ENCODE measurements at regions of chr2 and their contacts with region 1.

Region 1: DNA sequence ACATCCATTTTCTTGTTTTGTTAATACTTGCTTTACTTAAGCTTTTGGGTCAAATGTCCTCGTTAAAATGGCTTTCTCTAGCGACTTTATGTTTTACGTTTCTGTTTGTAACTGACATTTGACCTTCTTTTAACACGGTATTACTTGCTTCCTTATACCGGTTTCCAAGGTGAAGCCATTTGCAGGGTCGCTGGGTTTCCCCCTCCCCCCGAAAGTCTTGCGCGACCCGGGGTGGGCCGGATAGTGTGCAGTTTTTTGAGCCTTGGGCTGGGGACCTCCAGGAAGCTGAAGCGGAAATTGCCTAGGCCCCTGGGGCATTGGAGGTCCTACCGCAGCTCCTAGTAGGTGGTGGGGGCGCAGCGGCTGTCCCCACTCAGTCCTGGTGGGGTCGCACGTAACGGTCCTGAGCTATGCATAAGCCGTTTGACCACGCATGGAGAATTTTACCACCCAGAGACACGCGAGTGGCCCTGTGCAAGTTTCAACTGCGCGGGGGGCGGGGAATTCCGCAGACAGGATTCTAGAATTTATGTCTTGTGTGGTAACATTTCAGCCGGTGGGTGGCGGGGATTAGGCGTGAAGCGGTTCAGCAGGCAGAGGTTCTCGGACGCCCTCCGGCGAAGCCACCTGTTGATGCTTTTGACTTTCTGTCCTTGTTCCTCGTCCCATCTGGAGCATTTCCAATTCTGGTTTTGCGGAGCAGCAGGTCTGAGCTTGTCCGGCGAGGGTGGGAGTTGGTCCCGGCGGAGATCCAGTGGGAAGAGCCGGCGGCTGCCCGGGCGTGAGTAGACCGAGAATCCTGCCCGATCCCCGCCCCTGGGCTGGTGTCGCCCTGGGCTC is 2.4 kb downstream of the CFLAR start:
- DNase-seq: peak; percentile 86 to 92
- ATAC-seq: peak; percentile 49 to 75 (median 66)
- H3K4me3 ChIP-seq: peak overlapping the region; percentile 73 to 96 (median 84)
- H3K27ac ChIP-seq: peak overlapping the region; percentile 98 to 100 (median 100)
- H3K4me1 ChIP-seq: peaks cover 3 to 59% (median 50%) of the 10 kb centered on the region in 9 donors
- H3K27me3 ChIP-seq: no peaks in the 10 kb centered on the region
- CTCF ChIP-seq: peak; percentile 26 to 70 (median 52)

Region 2: GRCh38 chr2:200585730-200586643 is 532.4 kb before region 1 on chr2 and contains the start of gene AOX1:
- intact Hi-C with region 1: no loop called
- DNase-seq: peak in 1 of 2 donors; percentile 46
- ATAC-seq: peak; percentile 51 to 78 (median 71)
- H3K4me3 ChIP-seq: peak within 1 kb of the TSS; percentile 16 to 71 (median 58)
- H3K27ac ChIP-seq: peak within 1 kb of the TSS in 7 of 10 donors; percentile 18 to 71 (median 33)
- H3K4me1 ChIP-seq: peaks cover 0 to 14% (median 7%) of the 10 kb centered on the region in 9 donors
- H3K27me3 ChIP-seq: peaks cover 0 to 5% (median 0%) of the 10 kb centered on the region in 7 donors
- CTCF ChIP-seq: peak in 1 of 9 donors; percentile 6
- total RNA-seq, gene AOX1: 0.72 to 22.3 (median 2.2) TPM

Region 3: GRCh38 chr2:200850512-200851256 is 267.7 kb before region 1 on chr2:
- intact Hi-C with region 1: no loop called
- DNase-seq: no peak
- ATAC-seq: peak in 6 of 8 donors; percentile 20 to 63 (median 42)
- H3K4me3 ChIP-seq: no peak overlapping the region
- H3K27ac ChIP-seq: no peak overlapping the region
- H3K4me1 ChIP-seq: peaks cover 0 to 7% (median 0%) of the 10 kb centered on the region in 9 donors
- H3K27me3 ChIP-seq: no peaks in the 10 kb centered on the region
- CTCF ChIP-seq: no peak

Region 4: DNA sequence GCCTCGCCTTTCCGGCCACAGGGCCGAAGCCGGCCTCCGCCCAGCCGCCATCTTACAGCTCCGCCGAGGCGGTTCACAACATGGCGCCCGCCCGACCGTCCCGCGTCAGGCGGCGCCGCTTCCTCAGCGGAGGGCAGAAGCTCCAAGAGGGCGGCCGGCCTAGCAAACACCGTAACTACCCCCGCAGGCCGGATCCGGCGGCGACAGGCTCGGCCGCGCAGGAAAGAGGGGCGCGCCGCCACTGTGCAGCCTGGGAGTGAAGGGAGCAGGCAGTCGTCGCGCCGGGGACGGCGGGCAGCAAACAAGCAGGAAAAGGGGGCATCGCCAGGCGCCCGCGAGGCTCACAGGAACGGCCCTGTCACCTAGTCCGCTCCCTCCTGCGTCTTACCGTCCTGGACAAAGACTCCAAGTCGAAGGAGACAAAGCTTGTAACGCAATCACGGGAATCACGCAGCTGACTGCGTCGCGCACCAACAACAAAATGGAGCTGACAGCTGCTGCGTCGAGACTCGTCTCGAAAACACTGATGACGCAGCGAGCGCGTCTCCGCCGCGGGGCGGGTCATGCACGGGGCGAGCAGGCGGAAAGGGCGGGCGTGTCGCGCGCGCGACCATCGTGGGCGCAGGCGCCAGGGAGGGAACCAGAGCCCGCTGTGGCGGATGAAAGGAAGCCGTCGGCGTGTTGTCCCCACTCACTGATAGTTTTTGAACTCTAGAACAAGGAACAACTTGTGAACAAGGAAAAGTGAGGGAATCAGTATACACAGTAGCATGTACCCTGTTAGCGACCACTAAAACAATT is 254.0 kb before region 1 on chr2 and contains the start of gene CLK1:
- intact Hi-C with region 1: loop called in 1 of 10 experiments (anchors 2 kb)
- DNase-seq: peak; percentile 98 to 99
- ATAC-seq: peak; percentile 94 to 97 (median 96)
- H3K4me3 ChIP-seq: peak within 1 kb of the TSS; percentile 73 to 98 (median 90)
- H3K27ac ChIP-seq: peak within 1 kb of the TSS; percentile 99 to 100 (median 100)
- H3K4me1 ChIP-seq: peaks cover 3 to 51% (median 34%) of the 10 kb centered on the region in 9 donors
- H3K27me3 ChIP-seq: no peaks in the 10 kb centered on the region
- CTCF ChIP-seq: no peak
- total RNA-seq, gene CLK1: 30.8 to 59.6 (median 45.3) TPM

Region 5: GRCh38 chr2:201071479-201072200 is 46.7 kb before region 1 on chr2 and contains the starts of genes HYCC2 and NDUFB3:
- intact Hi-C with region 1: loop called in 6 of 10 experiments (anchors 2 to 5 kb)
- DNase-seq: peak; percentile 90 to 92
- ATAC-seq: peak; percentile 99 to 100 (median 99)
- H3K4me3 ChIP-seq: peak within 1 kb of the TSS; percentile 68 to 97 (median 88)
- H3K27ac ChIP-seq: peak within 1 kb of the TSS; percentile 81 to 97 (median 90)
- H3K4me1 ChIP-seq: peaks cover 4 to 70% (median 50%) of the 10 kb centered on the region in 9 donors
- H3K27me3 ChIP-seq: no peaks in the 10 kb centered on the region
- CTCF ChIP-seq: peak in 6 of 9 donors; percentile 28 to 65 (median 46)
- total RNA-seq, gene HYCC2: 9.4 to 15.3 (median 12.9) TPM
- total RNA-seq, gene NDUFB3: 313 to 513 (median 457) TPM

Region 6: GRCh38 chr2:201130524-201131186 is 12.3 kb after region 1 on chr2:
- intact Hi-C with region 1: loop called in 1 of 10 experiments (anchors 2 kb)
- DNase-seq: peak in 1 of 2 donors; percentile 36
- ATAC-seq: peak; percentile 39 to 69 (median 56)
- H3K4me3 ChIP-seq: peak overlapping the region in 8 of 10 donors; percentile 4 to 36 (median 12)
- H3K27ac ChIP-seq: peak overlapping the region; percentile 82 to 100 (median 100)
- H3K4me1 ChIP-seq: peaks cover 30 to 100% (median 100%) of the 10 kb centered on the region in 9 donors
- H3K27me3 ChIP-seq: no peaks in the 10 kb centered on the region
- CTCF ChIP-seq: no peak

Region 7: GRCh38 chr2:201158111-201158929 is 40.0 kb after region 1 on chr2:
- intact Hi-C with region 1: loop called in 9 of 10 experiments (anchors 2 to 10 kb)
- DNase-seq: peak in 1 of 2 donors; percentile 72
- ATAC-seq: peak; percentile 80 to 88 (median 84)
- H3K4me3 ChIP-seq: no peak overlapping the region
- H3K27ac ChIP-seq: peak overlapping the region in 9 of 10 donors; percentile 29 to 86 (median 53)
- H3K4me1 ChIP-seq: peaks cover 7 to 68% (median 34%) of the 10 kb centered on the region in 9 donors
- H3K27me3 ChIP-seq: no peaks in the 10 kb centered on the region
- CTCF ChIP-seq: peak; percentile 31 to 81 (median 66)

Measured in heart right ventricle (tissue), 16 donors.